Posterior cingulate gyrus (tissue), 11 donors: ENCODE measurements at regions of chr6 and their contacts with region 1.

Region 1: GRCh38 chr6:159693128-159693893 is at the start of gene SOD2:
- DNase-seq: peak; percentile 67 to 97 (median 80)

Region 2: DNA sequence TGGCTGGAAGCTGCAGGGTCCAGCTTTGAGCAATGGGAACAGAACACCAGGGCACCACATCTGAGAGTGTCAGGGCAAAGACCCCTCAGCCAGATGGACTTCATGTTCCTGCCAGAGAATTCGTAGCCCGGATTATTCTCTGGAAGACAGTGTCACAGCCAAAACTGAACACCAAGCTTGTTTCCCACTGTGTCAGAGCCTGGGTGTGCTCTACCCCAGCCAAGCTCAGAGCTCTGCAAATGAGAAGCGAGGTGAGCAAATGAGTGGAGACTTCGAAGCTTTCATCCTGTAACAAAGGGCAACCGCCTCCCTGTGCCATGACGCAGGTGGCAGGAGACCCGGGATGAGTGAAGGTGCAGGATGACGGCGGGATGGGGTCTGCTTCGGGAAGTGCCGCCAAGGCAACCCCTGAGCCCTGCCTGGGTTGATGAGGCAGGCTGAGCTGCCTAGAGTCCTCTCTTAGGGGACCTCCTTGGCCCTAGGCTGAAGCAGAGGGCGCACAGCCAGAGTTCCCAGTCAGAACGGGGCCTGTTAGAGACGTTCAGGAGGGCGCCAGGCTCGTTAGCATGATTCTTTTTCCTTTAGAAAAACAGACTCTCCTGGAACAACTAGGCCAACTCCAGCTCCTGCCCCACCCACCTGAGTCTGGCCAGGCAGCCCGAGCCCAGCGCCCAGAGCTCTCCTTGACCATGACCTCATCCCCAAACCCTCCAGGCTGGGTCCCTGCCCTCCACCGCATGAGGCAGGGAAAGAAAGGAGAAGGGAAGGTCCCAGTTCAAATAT is 188.0 kb before region 1 on chr6:
- intact Hi-C with region 1: no loop called
- DNase-seq: peak in 2 of 10 donors; percentile 19 to 80

Region 3: DNA sequence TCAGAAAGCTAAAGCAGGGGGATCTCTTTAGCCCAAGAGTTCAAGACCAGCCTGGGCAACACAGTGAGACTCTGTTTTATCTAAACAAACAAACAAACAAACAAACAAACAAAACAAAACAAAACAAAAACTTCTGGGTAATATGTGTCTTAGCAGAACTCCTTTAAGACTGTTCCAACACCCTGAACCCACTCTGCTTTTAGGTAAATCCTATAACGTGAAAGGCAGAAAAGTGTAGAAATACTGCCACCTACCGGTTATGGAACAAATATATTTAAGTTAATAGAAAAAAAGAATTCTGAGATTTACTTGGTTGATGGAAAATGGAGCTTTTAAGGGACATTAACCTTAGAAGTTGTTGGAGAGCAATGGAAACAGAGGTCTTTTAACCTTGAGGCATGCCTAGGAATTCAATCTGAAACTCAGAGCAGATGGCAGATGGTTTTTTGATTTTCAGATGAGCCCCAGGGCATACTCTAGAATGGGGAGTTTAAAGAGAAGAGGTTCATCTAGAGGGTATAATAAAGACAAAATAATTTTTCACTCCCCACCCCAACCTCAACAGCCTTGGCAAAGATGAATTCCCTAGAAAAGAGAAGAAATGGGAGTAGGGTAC is 38.7 kb before region 1 on chr6:
- intact Hi-C with region 1: no loop called
- DNase-seq: no peak

Region 4: GRCh38 chr6:159726918-159727716 is 33.8 kb after region 1 on chr6 and contains the start of gene WTAP:
- intact Hi-C with region 1: loop called (anchors 1 kb)
- DNase-seq: peak; percentile 92 to 99 (median 94)

Region 5: DNA sequence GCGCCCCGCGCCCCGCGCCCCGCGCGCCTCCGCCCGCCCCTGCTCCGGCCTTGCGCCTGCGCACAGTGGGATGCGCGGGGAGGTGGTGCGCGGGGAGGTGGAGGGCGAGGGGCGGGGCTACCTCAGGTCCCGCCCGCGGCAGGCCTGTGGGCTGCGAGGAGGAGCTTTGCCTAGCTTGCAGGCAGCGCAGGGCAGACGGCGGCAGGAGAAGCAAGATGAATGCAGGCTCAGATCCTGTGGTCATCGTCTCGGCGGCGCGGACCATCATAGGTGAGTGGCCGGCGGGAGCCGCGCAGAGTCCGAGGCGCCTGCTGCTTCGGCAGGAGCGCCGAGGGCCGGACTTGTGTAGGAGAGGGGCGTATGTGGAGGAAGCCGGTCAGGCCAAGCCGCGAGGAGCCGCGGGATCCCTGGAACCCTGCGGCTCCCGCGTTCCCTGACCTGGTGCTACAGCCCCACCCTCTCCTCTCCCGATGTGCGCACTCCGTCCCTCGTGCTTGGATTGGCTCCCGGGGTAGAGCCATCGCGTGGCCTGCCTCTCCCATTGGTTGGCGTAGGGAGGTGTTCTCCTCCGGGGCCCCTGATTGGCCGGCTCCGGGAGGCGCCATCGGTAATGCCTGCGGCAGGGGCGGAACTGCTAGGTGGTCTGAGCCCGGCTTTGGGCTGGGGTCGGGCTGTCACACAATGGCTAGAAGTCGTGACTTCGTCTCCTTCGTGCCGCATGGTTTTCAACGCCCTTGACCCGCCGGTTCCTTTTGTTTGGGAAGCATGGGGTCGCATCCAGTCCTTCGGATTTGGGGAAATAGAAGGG is 68.8 kb after region 1 on chr6 and contains the start of gene ACAT2:
- intact Hi-C with region 1: loop called (anchors 2 kb)
- DNase-seq: peak; percentile 97 to 100 (median 99)

Region 6: GRCh38 chr6:159789377-159790148 is 96.3 kb after region 1 on chr6 and contains the start of gene TCP1:
- intact Hi-C with region 1: loop called (anchors 5 kb)
- DNase-seq: peak; percentile 98 to 100 (median 99)

Region 7: DNA sequence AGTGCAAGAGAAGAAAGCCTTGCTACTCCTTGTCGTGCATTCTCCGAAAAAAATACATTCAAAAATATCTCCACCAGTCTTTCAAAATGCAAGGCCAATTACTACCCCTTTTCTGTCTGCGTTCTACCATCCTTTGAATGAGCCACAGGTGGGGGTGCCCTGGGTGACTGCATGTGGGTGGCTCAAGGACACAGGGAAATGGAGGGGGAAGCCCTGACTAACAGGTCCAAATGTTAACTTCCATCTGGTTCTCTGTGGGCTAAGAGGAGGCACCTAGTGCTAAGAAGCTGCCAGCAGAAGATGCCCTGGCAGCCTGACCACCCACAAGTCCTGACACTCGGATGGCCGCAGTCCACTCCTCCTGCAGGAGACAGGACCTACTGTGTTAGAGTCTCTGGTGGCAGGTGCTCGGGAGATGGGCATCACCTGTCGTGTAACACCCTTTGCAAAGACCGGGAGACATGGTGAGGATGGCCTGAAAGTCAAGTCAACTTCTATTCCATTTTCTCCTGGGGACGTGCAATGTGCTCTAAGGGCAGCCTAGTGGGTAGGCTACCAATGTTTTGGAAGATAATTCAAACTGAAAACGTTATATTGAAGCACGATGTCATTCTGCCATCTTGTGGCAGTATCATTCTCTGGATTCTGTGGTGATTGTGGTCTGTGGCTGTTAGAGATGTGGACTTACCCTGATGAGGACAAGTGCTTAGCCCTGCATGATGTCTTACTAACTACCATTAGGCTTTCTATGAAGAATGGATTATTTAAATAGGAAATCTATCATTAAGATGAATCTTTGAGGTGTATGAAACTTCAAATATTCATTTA is 248.2 kb after region 1 on chr6:
- intact Hi-C with region 1: loop called (anchors 5 kb)
- DNase-seq: no peak